CD14-positive monocyte (primary cell): ENCODE measurements at regions of chr21 and their contacts with region 1.

Region 1: GRCh38 chr21:38805328-38806152 is at the start of gene ETS2:
- DNase-seq: peak; percentile 88 to 95 (median 93)
- H3K4me3 ChIP-seq: peak within 1 kb of the TSS; percentile 65 to 95 (median 85)
- H3K4me3 Mint-ChIP-seq: peak within 1 kb of the TSS; percentile 89 to 95
- H3K27ac ChIP-seq: peak within 1 kb of the TSS; percentile 89 to 90
- H3K27ac Mint-ChIP-seq: peak within 1 kb of the TSS; percentile 86 to 98 (median 95)
- H3K4me1 ChIP-seq: peaks cover 48 to 49% of the 10 kb centered on the region in 2 donors
- H3K4me1 Mint-ChIP-seq: peaks cover 39% of the 10 kb centered on the region
- H3K27me3 ChIP-seq: no peaks in the 10 kb centered on the region
- H3K27me3 Mint-ChIP-seq: peaks cover 1 to 2% (median 2%) of the 10 kb centered on the region in 3 donors
- CTCF ChIP-seq: peak; percentile 7
- polyA plus RNA-seq, gene ETS2: 54.2 to 150 (median 59.5) TPM

Region 2: GRCh38 chr21:38733973-38734546 is 71.5 kb before region 1 on chr21:
- intact Hi-C with region 1: loop called (anchors 5 kb)
- DNase-seq: peak; percentile 71 to 83 (median 79)
- H3K4me3 ChIP-seq: peak overlapping the region; percentile 32 to 79 (median 47)
- H3K4me3 Mint-ChIP-seq: peak overlapping the region; percentile 88 to 96
- H3K27ac ChIP-seq: peak overlapping the region; percentile 75 to 77
- H3K27ac Mint-ChIP-seq: peak overlapping the region; percentile 90 to 98 (median 96)
- H3K4me1 ChIP-seq: peaks cover 14 to 19% of the 10 kb centered on the region in 2 donors
- H3K4me1 Mint-ChIP-seq: peaks cover 21% of the 10 kb centered on the region
- H3K27me3 ChIP-seq: no peaks in the 10 kb centered on the region
- H3K27me3 Mint-ChIP-seq: peaks cover 0 to 4% (median 0%) of the 10 kb centered on the region in 3 donors
- CTCF ChIP-seq: peak; percentile 95

Region 3: GRCh38 chr21:38755681-38756371 is 49.7 kb before region 1 on chr21:
- intact Hi-C with region 1: loop called in 1 of 2 experiments (anchors 5 kb)
- DNase-seq: peak; percentile 87 to 95 (median 92)
- H3K4me3 ChIP-seq: peak overlapping the region in 1 of 3 experiments; percentile 12
- H3K4me3 Mint-ChIP-seq: peak overlapping the region; percentile 16 to 53
- H3K27ac ChIP-seq: peak overlapping the region; percentile 75 to 94
- H3K27ac Mint-ChIP-seq: peak overlapping the region; percentile 90 to 97 (median 95)
- H3K4me1 ChIP-seq: peaks cover 77 to 80% of the 10 kb centered on the region in 2 donors
- H3K4me1 Mint-ChIP-seq: peaks cover 86% of the 10 kb centered on the region
- H3K27me3 ChIP-seq: no peaks in the 10 kb centered on the region
- H3K27me3 Mint-ChIP-seq: peaks cover 0 to 4% (median 0%) of the 10 kb centered on the region in 3 donors
- CTCF ChIP-seq: no peak

Region 4: DNA sequence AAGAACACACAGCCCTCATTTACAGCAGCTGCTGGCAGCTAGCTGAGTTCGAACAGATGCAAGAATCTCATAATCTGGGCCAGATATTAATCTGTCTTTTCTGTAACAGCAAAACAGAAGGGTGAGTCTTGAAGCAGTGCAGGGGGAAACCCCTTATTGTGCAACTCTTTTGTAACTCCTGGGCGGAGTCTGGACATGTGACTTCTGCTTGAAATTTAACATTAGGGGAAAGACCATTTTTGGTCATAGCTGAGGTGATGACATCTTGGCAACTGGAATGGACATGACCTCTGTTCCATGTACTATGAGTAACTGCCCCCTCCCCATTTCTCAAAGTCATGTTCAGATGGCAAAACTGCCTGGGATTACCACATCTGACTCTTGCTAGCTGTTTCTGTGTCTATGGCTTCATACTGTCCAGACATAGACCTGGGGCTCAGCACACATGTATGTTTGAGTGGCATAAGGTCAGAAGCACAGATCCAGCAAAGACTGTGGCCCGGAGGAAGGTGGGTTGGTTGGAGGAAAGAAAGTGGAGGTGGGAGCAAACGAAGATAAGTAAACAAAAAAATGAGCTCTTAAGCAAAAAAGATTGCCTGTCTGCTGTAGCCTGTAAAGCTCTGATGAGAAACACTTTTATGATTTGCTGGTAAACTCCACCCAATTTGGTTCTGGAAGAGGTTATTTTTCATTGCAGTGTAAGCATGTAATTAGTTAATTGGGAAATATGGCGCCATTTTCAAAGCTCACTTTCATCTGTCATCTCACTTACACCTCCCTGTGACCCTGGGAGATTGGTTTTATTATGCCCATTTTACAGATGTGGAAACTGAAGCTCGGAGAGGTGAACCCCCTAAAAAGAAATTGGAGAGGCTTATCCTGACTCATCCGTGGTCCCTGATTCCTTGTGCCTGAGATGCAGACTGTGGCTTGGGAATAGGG is 26.3 kb after region 1 on chr21:
- intact Hi-C with region 1: loop called in 1 of 2 experiments (anchors 1 kb)
- DNase-seq: peak; percentile 99 to 100 (median 99)
- H3K4me3 ChIP-seq: peak overlapping the region in 1 of 3 experiments; percentile 58
- H3K4me3 Mint-ChIP-seq: peak overlapping the region; percentile 39 to 82
- H3K27ac ChIP-seq: peak overlapping the region; percentile 89 to 95
- H3K27ac Mint-ChIP-seq: peak overlapping the region; percentile 94 to 99 (median 98)
- H3K4me1 ChIP-seq: peaks cover 26 to 27% of the 10 kb centered on the region in 2 donors
- H3K4me1 Mint-ChIP-seq: peaks cover 31% of the 10 kb centered on the region
- H3K27me3 ChIP-seq: no peaks in the 10 kb centered on the region
- H3K27me3 Mint-ChIP-seq: no peaks in the 10 kb centered on the region
- CTCF ChIP-seq: no peak